Activated naive CD4-positive, alpha-beta T cell treated with anti-CD3 and anti-CD28 coated beads for 36 hours (primary cell): ENCODE measurements at regions of chr5 and their contacts with region 1.

Region 1: GRCh38 chr5:115309751-115310370 is 13.4 kb upstream of the CCDC112 start:
- DNase-seq: no peak
- H3K4me3 Mint-ChIP-seq: no peak overlapping the region
- H3K27ac Mint-ChIP-seq: no peak overlapping the region
- H3K4me1 Mint-ChIP-seq: no peaks in the 10 kb centered on the region
- H3K27me3 Mint-ChIP-seq: peaks cover 22% of the 10 kb centered on the region

Region 2: GRCh38 chr5:115571441-115571878 is 261.6 kb after region 1 on chr5:
- CTCF ChIA-PET with region 1: interaction called, 118 read pairs
- intact Hi-C with region 1: loop called (anchors 1 kb)
- DNase-seq: no peak
- H3K4me3 Mint-ChIP-seq: no peak overlapping the region
- H3K27ac Mint-ChIP-seq: no peak overlapping the region
- H3K4me1 Mint-ChIP-seq: peaks cover 3% of the 10 kb centered on the region
- H3K27me3 Mint-ChIP-seq: peaks cover 3% of the 10 kb centered on the region

Region 3: GRCh38 chr5:115579747-115580173 is 269.9 kb after region 1 on chr5:
- CTCF ChIA-PET with region 1: interaction called, 118 read pairs
- intact Hi-C with region 1: loop called (anchors 1 kb)
- DNase-seq: no peak
- H3K4me3 Mint-ChIP-seq: no peak overlapping the region
- H3K27ac Mint-ChIP-seq: no peak overlapping the region
- H3K4me1 Mint-ChIP-seq: no peaks in the 10 kb centered on the region
- H3K27me3 Mint-ChIP-seq: no peaks in the 10 kb centered on the region

Region 4: GRCh38 chr5:115586601-115587048 is 276.8 kb after region 1 on chr5:
- CTCF ChIA-PET with region 1: interaction called, 4 read pairs
- intact Hi-C with region 1: loop called (anchors 1 kb)
- DNase-seq: no peak
- H3K4me3 Mint-ChIP-seq: no peak overlapping the region
- H3K27ac Mint-ChIP-seq: no peak overlapping the region
- H3K4me1 Mint-ChIP-seq: no peaks in the 10 kb centered on the region
- H3K27me3 Mint-ChIP-seq: no peaks in the 10 kb centered on the region

Region 5: GRCh38 chr5:116068028-116068632 is 758.3 kb after region 1 on chr5:
- CTCF ChIA-PET with region 1: no interaction called
- intact Hi-C with region 1: loop called (anchors 1 kb)
- DNase-seq: peak; percentile 55
- H3K4me3 Mint-ChIP-seq: no peak overlapping the region
- H3K27ac Mint-ChIP-seq: no peak overlapping the region
- H3K4me1 Mint-ChIP-seq: no peaks in the 10 kb centered on the region
- H3K27me3 Mint-ChIP-seq: peaks cover 22% of the 10 kb centered on the region